ENCODE measurements at regions of chrX and their contacts with region 1.

Region 1: GRCh38 chrX:108020631-108021030 is 24.2 kb upstream of the VSIG1 start:
- DNase-seq: peak in 1 of 2 experiments; percentile 46
- ATAC-seq: peak in 1 of 2 experiments; percentile 61; a peak in 2 of 6 replicates
- H3K4me3 ChIP-seq: no peak overlapping the region
- H3K27ac ChIP-seq: no peak overlapping the region
- H3K4me1 ChIP-seq: no peaks in the 10 kb centered on the region
- CTCF ChIP-seq: peak; percentile 60
- EP300 ChIP-seq: no peak
- POLR2A ChIP-seq: no peak
- RAD21 ChIP-seq: peak; percentile 73 to 77

Region 2: GRCh38 chrX:107880054-107880610 is 140.5 kb before region 1 on chrX:
- CTCF ChIA-PET with region 1: no interaction called
- POLR2A ChIA-PET with region 1: no interaction called
- DNase-seq: no peak
- ATAC-seq: no peak
- H3K4me3 ChIP-seq: no peak overlapping the region
- H3K27ac ChIP-seq: no peak overlapping the region
- H3K4me1 ChIP-seq: no peaks in the 10 kb centered on the region
- CTCF ChIP-seq: no peak
- EP300 ChIP-seq: no peak
- POLR2A ChIP-seq: no peak
- RAD21 ChIP-seq: no peak

Region 3: DNA sequence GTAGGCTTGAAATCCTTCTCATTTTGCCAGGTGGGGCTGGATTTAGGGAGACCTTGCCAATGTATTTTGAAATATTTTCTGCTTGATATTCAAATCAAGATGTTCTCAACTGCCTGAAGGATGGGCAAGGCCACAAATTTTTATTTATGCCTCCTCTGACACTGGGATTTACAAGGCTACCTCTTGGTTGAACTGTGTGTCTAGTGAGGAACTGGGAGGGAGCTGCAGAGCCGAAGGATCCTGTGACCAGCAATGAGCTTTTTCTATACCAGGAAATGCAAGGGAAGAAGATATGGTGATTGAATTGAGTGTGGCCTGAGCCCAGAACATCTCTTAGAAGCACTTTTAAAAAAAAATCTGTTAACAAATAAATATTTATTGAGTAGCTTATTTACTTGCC is 39.2 kb after region 1 on chrX:
- CTCF ChIA-PET with region 1: interaction called, 13 read pairs
- POLR2A ChIA-PET with region 1: no interaction called
- DNase-seq: no peak
- ATAC-seq: no peak
- H3K4me3 ChIP-seq: no peak overlapping the region
- H3K27ac ChIP-seq: no peak overlapping the region
- H3K4me1 ChIP-seq: no peaks in the 10 kb centered on the region
- CTCF ChIP-seq: no peak
- EP300 ChIP-seq: no peak
- POLR2A ChIP-seq: no peak
- RAD21 ChIP-seq: no peak

Region 4: DNA sequence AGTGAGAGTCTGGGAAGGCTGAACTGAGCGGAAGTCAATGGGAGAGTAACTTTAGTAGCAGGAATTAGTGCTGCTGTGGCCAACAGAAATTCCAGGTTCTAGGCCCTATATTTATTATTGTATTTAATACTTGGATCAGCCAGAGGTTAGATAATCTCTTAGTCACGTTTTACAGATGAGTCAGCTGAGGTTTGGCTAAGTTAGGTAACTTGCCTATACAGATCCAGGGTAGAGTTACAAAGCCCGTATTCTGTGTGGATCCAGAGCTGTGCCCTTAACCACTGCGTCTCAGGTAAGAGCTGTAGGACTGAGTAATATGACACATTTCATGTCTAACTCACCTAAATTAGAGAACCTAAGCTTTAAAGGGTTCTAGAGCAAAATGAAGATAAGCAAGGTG is 50.3 kb after region 1 on chrX:
- CTCF ChIA-PET with region 1: interaction called, 37 read pairs
- POLR2A ChIA-PET with region 1: no interaction called
- DNase-seq: peak in 1 of 2 experiments; percentile 10
- ATAC-seq: peak; percentile 50 to 55; a peak in 2 of 6 replicates
- H3K4me3 ChIP-seq: no peak overlapping the region
- H3K27ac ChIP-seq: no peak overlapping the region; a peak in 1 of 6 replicates
- H3K4me1 ChIP-seq: peaks cover 15% of the 10 kb centered on the region; the same call in 2 of the 3 replicates
- CTCF ChIP-seq: no peak
- EP300 ChIP-seq: no peak
- POLR2A ChIP-seq: no peak
- RAD21 ChIP-seq: no peak

Measured in A549 (cell line).